Activated naive CD8-positive, alpha-beta T cell treated with anti-CD3 and anti-CD28 coated beads, Interleukin-2, amount 10 ng/mL, durations not matched to agents 7 days and 5 days (primary cell): ENCODE measurements at regions of chr19 and their contacts with region 1.

Region 1: GRCh38 chr19:42244347-42245220 is 2.2 kb upstream of the GSK3A start:
- DNase-seq: peak; percentile 90
- ATAC-seq: peak; percentile 34
- H3K4me3 Mint-ChIP-seq: peak overlapping the region; percentile 93
- H3K27ac Mint-ChIP-seq: peak overlapping the region; percentile 91
- H3K4me1 Mint-ChIP-seq: peaks cover 31% of the 10 kb centered on the region
- H3K27me3 Mint-ChIP-seq: no peaks in the 10 kb centered on the region

Region 2: GRCh38 chr19:42199440-42200115 is 45.0 kb before region 1 on chr19:
- POLR2A ChIA-PET with region 1: interaction called, 63 read pairs
- DNase-seq: peak; percentile 86
- ATAC-seq: peak; percentile 68
- H3K4me3 Mint-ChIP-seq: peak overlapping the region; percentile 77
- H3K27ac Mint-ChIP-seq: peak overlapping the region; percentile 95
- H3K4me1 Mint-ChIP-seq: peaks cover 59% of the 10 kb centered on the region
- H3K27me3 Mint-ChIP-seq: no peaks in the 10 kb centered on the region

Region 3: GRCh38 chr19:42219812-42220750 is 24.5 kb before region 1 on chr19 and contains the start of gene ZNF526:
- POLR2A ChIA-PET with region 1: interaction called, 11 read pairs
- DNase-seq: peak; percentile 97
- ATAC-seq: peak; percentile 82
- H3K4me3 Mint-ChIP-seq: peak within 1 kb of the TSS; percentile 97
- H3K27ac Mint-ChIP-seq: peak within 1 kb of the TSS; percentile 95
- H3K4me1 Mint-ChIP-seq: peaks cover 40% of the 10 kb centered on the region
- H3K27me3 Mint-ChIP-seq: no peaks in the 10 kb centered on the region
- total RNA-seq, gene ZNF526: 19.6 to 20.6 TPM

Region 4: GRCh38 chr19:42268704-42269477 is 24.3 kb after region 1 on chr19 and contains the start of gene CIC:
- POLR2A ChIA-PET with region 1: interaction called, 32 read pairs
- DNase-seq: peak; percentile 98
- ATAC-seq: peak; percentile 89
- H3K4me3 Mint-ChIP-seq: peak within 1 kb of the TSS; percentile 99
- H3K27ac Mint-ChIP-seq: no peak within 1 kb of the TSS
- H3K4me1 Mint-ChIP-seq: peaks cover 28% of the 10 kb centered on the region
- H3K27me3 Mint-ChIP-seq: no peaks in the 10 kb centered on the region
- total RNA-seq, gene CIC: 84.4 to 92.2 TPM

Region 5: DNA sequence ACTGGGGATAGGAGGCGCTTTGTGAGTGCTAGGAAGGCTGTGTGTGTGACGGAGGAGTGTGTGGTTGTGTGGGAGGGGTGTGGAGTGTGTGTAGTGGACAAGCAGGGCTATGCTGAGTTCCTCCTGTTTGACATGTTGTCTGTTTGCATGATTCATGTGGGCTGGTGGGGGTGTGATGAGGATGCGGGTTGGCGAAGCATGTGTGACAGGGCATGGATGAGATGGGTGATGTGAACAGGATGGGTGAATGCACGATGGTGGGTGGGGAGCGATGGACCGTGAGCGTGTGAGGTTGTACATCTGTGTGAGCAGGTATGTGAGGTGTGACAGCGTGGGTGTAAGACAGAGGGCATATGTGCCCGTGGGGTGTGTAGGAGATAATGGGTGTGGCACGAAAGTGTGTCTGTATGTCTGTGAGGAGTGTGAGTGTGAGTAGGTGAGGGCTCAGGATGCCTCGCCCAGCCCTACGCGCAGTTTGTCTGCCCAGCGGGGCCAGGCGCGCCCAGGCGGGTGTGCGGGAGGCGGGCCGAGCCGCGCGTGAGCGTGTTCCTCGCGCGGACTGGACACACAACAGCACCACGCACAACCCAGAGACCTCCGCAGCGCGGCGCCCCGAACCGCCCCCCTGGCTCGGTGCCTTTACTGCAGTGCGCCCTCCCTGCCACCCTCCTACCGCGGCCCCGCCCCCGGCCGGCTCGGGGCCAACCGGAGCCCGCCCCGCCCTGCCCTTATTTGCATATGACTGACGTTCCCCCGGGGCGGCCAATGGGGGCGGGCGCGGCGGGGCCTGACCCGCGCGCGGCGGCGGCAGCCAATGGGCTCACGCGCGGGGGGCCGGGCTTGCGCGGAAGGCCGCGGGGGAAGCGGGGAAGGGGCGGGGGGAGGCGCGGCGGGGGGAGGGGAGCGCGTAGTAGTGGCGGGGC is 38.8 kb after region 1 on chr19:
- POLR2A ChIA-PET with region 1: interaction called, 73 read pairs
- DNase-seq: peak; percentile 97
- ATAC-seq: peak; percentile 66
- H3K4me3 Mint-ChIP-seq: no peak overlapping the region
- H3K27ac Mint-ChIP-seq: no peak overlapping the region
- H3K4me1 Mint-ChIP-seq: peaks cover 40% of the 10 kb centered on the region
- H3K27me3 Mint-ChIP-seq: no peaks in the 10 kb centered on the region